ENCODE measurements at regions of chr10 and their contacts with region 1.

Region 1: GRCh38 chr10:110535958-110536891 is 31.3 kb upstream of the SMC3 start:
- DNase-seq: peak; percentile 40
- ATAC-seq: peak; percentile 67 to 71

Region 2: GRCh38 chr10:110311357-110311949 is 224.8 kb before region 1 on chr10:
- intact Hi-C with region 1: loop called (anchors 2 kb)
- DNase-seq: peak; percentile 57
- ATAC-seq: peak; percentile 77 to 84

Region 3: DNA sequence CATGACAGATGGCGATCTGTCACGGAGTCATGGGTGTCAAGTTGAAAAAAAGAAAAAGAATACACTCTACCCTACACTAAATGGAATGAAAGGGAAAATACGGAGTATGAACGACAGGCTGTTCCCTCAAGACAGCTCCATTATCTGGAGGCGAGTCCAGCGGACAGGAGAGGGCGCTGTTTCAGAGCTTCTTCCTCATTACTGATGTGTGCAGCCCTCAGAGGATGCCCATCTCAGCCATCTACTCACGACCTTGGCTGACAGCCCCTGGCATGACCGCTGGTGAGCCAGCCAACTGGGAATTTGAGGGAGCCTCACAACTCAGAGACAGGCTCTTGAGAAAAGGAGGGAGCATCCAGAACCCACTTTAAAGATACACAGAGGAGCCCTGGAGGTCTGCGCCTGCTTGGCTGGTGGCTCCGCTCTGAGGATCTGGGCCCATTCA is 181.9 kb before region 1 on chr10:
- intact Hi-C with region 1: loop called (anchors 5 kb)
- DNase-seq: peak; percentile 89
- ATAC-seq: peak; percentile 86 to 89

Region 4: DNA sequence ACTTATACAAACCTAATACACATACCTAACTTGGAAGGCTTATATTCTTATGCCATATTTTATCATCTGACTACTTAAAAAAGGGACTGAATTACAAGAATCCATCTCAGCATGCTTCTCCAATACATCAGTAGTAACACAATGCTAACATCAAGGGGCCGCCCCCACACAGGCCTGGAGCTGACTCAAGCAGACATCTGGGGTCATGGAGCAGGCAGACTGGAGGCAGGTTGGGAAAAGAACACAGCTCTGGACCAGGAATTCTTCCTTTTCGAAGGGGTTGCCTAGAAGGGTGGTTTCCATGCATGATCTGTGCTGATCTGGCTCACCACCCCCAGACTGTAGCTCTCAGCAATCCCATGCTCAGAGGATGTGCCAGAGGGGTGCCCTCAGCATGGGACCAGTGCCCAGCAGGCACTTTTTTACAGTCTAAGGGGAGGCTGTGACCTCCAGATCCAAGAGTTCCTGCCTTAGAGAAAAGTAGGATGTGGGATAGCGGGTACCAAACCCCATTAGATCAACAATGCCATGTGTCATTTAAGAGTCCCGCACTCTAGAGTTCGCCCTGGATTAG is 64.6 kb before region 1 on chr10:
- intact Hi-C with region 1: no loop called
- DNase-seq: no peak
- ATAC-seq: no peak

Region 5: GRCh38 chr10:110497438-110498086 is 38.7 kb before region 1 on chr10 and contains the start of gene DUSP5:
- intact Hi-C with region 1: loop called in 1 of 2 experiments (anchors 5 kb)
- DNase-seq: peak; percentile 96
- ATAC-seq: peak; percentile 89 to 92
- total RNA-seq, gene DUSP5: 8.9 to 14.3 TPM

Region 6: GRCh38 chr10:110610308-110610774 is 74.1 kb after region 1 on chr10:
- intact Hi-C with region 1: no loop called
- DNase-seq: no peak
- ATAC-seq: peak; percentile 61 to 66